WTC11 (cell line): ENCODE measurements at regions of chr1 and their contacts with region 1.

Region 1: DNA sequence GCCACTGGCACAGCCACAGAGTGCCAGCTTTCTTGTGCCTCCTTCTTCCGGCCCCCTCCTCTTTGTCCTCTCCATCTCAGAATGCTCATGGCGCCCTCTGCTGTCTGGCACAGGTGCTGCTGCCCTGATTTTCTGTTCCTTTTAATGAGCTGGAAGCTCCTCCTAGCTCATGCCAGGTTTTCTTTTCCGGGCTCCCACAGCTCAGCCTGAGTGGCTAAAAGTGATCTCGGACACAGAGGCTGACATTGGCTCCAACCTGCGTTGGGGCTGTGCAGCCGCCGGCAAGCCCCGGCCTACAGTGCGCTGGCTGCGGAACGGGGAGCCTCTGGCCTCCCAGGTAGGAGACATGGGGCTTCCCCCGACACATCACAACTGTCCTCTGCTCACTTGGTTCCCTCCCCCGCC is 18.7 kb downstream of the CNTN2 start:
- DNase-seq: peak; percentile 96
- ATAC-seq: peak; percentile 85
- H3K4me3 Mint-ChIP-seq: no peak overlapping the region
- H3K27ac Mint-ChIP-seq: no peak overlapping the region
- H3K4me1 Mint-ChIP-seq: peaks cover 9% of the 10 kb centered on the region; the same call in 1 of the 2 replicates
- H3K27me3 Mint-ChIP-seq: no peaks in the 10 kb centered on the region
- CTCF ChIP-seq: peak; percentile 84

Region 2: DNA sequence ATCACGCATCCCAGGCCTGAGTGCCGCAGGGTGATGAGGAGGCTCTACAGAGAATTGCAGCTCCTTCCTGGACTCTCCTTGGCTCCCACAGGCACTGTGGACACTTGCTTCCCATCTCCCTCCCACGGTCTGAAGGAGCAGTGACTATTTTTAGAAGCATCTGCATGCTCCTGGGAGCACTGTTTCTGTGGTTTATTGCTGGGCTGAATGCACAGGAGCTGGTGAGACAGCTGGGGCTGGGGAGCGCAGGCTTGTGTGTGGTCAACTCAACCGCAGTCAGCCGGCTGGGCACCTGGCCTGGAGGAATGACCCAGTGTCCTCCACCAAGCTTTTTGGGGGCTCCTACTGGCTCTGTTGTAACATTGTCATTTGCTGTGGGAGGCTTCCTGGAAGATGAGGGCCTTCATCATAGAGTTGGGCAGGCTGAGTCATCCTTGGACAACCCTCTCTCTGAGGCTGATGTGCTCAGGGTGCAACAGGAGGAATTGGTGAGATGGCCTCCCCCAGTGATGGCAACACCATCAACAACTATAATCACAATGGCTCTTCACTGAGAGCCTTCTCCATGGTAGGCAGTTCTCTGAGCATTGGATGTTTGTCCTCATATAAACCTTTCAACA is 189.3 kb before region 1 on chr1:
- CTCF ChIA-PET with region 1: no interaction called
- POLR2A ChIA-PET with region 1: no interaction called
- DNase-seq: no peak
- ATAC-seq: no peak
- H3K4me3 Mint-ChIP-seq: no peak overlapping the region
- H3K27ac Mint-ChIP-seq: no peak overlapping the region
- H3K4me1 Mint-ChIP-seq: peaks cover 35% of the 10 kb centered on the region
- H3K27me3 Mint-ChIP-seq: no peaks in the 10 kb centered on the region
- CTCF ChIP-seq: no peak

Region 3: DNA sequence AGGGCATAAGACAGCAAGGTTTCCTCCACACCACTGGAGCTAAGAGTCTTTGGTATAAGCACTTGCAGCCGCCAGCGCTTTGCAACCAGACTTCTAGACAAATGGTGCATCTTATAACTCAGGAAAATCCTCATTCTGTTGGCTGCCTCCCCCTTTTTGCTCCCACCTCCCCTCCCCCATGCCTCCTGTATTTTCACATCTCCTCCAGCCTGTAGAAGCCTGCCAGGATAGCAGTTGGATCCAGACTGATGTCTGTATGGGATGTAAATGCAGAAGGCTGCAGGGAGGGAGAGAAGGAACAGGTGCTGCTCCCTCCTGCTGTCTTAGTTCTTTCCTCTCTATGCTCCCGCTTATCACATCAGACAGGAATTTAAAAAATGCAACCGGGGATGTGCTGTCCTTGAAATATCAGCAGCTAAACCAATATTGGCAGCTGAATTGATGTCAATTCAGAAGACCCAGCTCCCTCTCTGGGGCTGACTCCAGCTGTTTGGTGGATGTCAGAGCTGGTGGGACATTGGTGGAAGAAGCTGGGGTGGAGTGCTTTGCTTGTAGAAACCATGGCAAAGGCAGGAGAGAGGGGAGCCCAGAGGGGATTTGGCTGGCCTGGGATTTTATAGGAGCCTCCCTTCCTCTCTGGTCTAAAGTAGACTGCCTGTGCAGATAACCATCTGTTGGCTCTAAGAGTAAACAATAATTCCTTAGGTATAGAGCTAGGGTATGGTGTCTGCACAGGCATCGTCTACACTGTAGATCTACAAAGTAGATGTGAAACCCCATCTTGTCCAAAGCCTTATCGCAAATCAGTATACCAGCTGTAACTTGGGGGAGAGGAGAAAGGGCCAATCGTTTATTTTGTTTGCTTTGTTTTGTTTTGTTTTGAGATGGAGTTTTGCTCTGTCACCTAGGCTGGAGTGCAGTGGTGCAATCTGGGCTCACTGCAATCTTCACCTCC is 137.4 kb before region 1 on chr1:
- CTCF ChIA-PET with region 1: interaction called, 13 read pairs
- POLR2A ChIA-PET with region 1: no interaction called
- DNase-seq: peak; percentile 57
- ATAC-seq: peak; percentile 84
- H3K4me3 Mint-ChIP-seq: peak overlapping the region; percentile 25
- H3K27ac Mint-ChIP-seq: peak overlapping the region; percentile 96
- H3K4me1 Mint-ChIP-seq: peaks cover 82% of the 10 kb centered on the region
- H3K27me3 Mint-ChIP-seq: peaks cover 2% of the 10 kb centered on the region; the same call in 1 of the 2 replicates
- CTCF ChIP-seq: no peak

Region 4: DNA sequence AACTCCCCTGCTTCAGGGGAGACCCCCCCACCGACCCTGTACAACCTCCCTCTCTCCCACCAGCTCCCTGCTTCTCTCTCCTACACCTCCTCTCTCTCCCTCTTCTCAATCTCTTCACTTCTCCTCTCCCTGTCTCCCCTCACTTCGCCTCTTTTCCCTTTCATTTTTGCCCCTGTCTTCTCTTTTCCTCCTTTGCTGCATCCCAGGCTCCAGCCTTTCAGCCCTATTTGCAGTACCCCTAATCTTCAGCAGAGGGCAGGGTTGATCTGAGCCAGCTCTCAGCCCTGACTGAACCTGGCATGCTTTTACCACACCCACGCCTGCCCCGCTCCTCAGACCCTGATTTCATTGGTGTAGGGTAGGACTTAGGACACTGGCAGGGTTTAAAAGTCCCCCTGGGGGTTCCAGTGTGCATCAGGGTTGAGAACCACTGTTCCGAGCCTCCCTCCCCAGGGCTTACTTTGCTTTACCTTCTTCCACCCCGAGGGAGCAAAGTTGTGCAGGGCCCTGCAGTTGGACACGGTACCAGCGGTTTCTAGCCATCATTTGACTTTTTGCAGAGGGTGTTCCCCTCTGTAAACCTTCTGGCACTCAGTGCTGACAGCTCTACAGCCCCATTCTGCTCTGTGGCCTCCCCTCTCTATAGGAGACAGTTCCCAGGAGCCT is 86.0 kb before region 1 on chr1:
- CTCF ChIA-PET with region 1: interaction called, 72 read pairs
- POLR2A ChIA-PET with region 1: no interaction called
- DNase-seq: peak; percentile 73
- ATAC-seq: peak; percentile 88
- H3K4me3 Mint-ChIP-seq: no peak overlapping the region
- H3K27ac Mint-ChIP-seq: no peak overlapping the region
- H3K4me1 Mint-ChIP-seq: no peaks in the 10 kb centered on the region
- H3K27me3 Mint-ChIP-seq: no peaks in the 10 kb centered on the region
- CTCF ChIP-seq: peak; percentile 84

Region 5: GRCh38 chr1:205020466-205020865 is 41.2 kb before region 1 on chr1:
- CTCF ChIA-PET with region 1: interaction called, 64 read pairs
- POLR2A ChIA-PET with region 1: no interaction called
- DNase-seq: no peak
- ATAC-seq: no peak
- H3K4me3 Mint-ChIP-seq: no peak overlapping the region
- H3K27ac Mint-ChIP-seq: no peak overlapping the region
- H3K4me1 Mint-ChIP-seq: no peaks in the 10 kb centered on the region
- H3K27me3 Mint-ChIP-seq: peaks cover 23% of the 10 kb centered on the region
- CTCF ChIP-seq: no peak

Region 6: GRCh38 chr1:205071801-205072200 is 10.1 kb after region 1 on chr1:
- CTCF ChIA-PET with region 1: interaction called, 109 read pairs
- POLR2A ChIA-PET with region 1: no interaction called
- DNase-seq: no peak
- ATAC-seq: no peak
- H3K4me3 Mint-ChIP-seq: no peak overlapping the region
- H3K27ac Mint-ChIP-seq: no peak overlapping the region
- H3K4me1 Mint-ChIP-seq: 0 out of 2 replicates have a peak, but pooled peaks cover 2% of the 10 kb centered on the region
- H3K27me3 Mint-ChIP-seq: no peaks in the 10 kb centered on the region
- CTCF ChIP-seq: no peak

Region 7: GRCh38 chr1:205190845-205191577 is 129.3 kb after region 1 on chr1:
- CTCF ChIA-PET with region 1: interaction called, 10 read pairs
- POLR2A ChIA-PET with region 1: interaction called, 4 read pairs
- DNase-seq: no peak
- ATAC-seq: peak; percentile 5; the same call in 1 of the 2 replicates
- H3K4me3 Mint-ChIP-seq: peak overlapping the region; percentile 51
- H3K27ac Mint-ChIP-seq: peak overlapping the region; percentile 89
- H3K4me1 Mint-ChIP-seq: peaks cover 80% of the 10 kb centered on the region
- H3K27me3 Mint-ChIP-seq: no peaks in the 10 kb centered on the region
- CTCF ChIP-seq: no peak

Region 8: DNA sequence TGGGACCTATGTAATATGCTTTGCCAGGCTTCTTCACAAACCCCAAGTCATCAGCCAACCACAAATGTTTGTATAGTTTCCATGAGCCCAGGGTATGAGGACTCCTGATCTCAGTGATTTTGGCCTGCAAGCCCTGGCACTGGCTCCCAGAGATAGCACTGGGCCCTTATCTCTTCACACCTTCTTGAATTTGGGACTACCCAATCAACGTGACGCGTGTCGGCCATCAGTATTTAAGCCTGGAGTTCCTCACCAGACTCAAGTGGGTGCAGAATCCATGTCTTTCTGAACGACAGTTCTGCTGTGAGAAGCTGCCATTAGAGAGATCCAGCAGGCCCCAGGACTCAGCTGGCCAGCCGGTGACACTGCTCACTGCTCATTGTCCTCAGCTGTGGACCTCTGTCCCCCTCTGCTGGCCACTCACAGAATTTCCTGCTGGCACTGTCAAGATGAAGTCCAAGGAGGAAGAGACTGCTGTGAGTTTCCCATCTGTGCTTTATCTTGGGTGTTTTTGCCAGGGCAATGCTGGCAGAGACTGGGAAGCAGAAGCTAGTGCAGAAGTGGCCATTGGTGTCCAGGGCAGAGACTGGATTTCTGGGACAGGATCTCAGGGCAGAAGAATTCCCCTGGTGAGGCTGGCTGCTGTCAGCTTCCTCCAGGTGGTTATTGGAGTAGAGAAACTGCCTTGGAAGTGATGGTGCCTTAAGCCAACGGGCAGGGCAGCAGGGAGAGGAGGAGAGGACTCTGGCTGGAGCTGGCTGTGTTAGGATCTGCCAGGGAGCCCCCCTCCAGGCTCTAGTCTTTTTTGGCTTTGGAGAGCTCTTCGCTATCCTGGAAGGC is 194.5 kb after region 1 on chr1:
- CTCF ChIA-PET with region 1: interaction called, 43 read pairs
- POLR2A ChIA-PET with region 1: no interaction called
- DNase-seq: peak; percentile 93
- ATAC-seq: peak; percentile 90
- H3K4me3 Mint-ChIP-seq: no peak overlapping the region
- H3K27ac Mint-ChIP-seq: 0 out of 2 replicates have a peak overlapping the region, but pooled peaks have one; percentile 83
- H3K4me1 Mint-ChIP-seq: peaks cover 17% of the 10 kb centered on the region
- H3K27me3 Mint-ChIP-seq: no peaks in the 10 kb centered on the region
- CTCF ChIP-seq: peak; percentile 98